ENCODE measurements at regions of chr17 and their contacts with region 1.

Region 1: DNA sequence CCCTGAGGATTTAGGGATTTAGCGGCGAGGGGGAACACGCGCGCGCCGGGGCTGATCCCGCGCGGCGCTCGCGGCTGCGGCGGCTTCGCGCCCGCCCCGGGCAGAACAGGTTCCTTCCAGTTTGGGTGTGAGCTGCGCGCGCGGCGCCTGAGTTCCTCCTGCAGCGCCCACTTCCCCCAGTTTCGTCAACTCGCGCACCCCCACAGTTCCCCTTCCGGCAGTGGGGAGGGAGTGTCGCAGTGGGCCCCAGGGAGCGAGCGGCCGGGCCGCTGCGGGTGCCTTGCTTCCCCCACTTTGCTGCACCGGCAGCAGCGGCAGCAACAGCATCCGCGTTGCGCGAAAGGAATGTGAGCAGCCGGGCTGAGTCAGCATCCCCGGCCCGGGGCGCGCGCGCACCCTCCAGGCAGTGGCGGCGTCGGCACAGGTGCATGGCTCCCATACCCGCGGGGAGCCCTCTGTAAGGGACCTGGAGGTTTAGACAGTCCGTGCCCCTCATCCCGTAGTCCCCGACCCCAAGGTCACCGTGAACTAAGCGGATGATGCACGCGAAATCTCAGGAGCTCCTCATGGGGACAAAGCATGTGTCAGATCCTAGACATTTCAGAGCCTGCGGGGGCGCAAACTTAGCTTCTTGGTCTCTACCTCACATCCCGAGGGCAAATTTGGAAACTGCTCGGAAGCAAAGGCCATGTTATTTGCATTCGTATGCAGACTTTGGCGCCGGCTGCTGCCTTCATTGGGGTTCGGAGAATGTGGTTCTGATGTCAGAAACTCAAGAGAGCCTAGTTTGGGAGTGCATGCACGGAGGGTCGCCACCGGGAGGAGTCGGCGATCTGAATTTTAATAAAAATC is 775 bp downstream of the ARSG start:
- DNase-seq: peak; percentile 75 to 77
- ATAC-seq: peak; percentile 72 to 85 (median 81)
- H3K4me3 ChIP-seq: peak overlapping the region; percentile 44 to 85 (median 72)
- H3K27ac ChIP-seq: peak overlapping the region in 9 of 10 donors; percentile 34 to 98 (median 81)
- H3K4me1 ChIP-seq: peaks cover 4 to 67% (median 20%) of the 10 kb centered on the region in 9 donors
- H3K27me3 ChIP-seq: peaks cover 0 to 34% (median 14%) of the 10 kb centered on the region in 7 donors
- CTCF ChIP-seq: peak in 2 of 9 donors; percentile 6 to 8

Region 2: GRCh38 chr17:68346448-68346847 is 54.4 kb after region 1 on chr17:
- intact Hi-C with region 1: no loop called
- DNase-seq: peak in 1 of 2 donors; percentile 31
- ATAC-seq: peak in 6 of 8 donors; percentile 22 to 56 (median 50)
- H3K4me3 ChIP-seq: no peak overlapping the region
- H3K27ac ChIP-seq: peak overlapping the region in 2 of 10 donors; percentile 55 to 87
- H3K4me1 ChIP-seq: peaks cover 0 to 59% (median 0%) of the 10 kb centered on the region in 9 donors
- H3K27me3 ChIP-seq: no peaks in the 10 kb centered on the region
- CTCF ChIP-seq: no peak

Region 3: DNA sequence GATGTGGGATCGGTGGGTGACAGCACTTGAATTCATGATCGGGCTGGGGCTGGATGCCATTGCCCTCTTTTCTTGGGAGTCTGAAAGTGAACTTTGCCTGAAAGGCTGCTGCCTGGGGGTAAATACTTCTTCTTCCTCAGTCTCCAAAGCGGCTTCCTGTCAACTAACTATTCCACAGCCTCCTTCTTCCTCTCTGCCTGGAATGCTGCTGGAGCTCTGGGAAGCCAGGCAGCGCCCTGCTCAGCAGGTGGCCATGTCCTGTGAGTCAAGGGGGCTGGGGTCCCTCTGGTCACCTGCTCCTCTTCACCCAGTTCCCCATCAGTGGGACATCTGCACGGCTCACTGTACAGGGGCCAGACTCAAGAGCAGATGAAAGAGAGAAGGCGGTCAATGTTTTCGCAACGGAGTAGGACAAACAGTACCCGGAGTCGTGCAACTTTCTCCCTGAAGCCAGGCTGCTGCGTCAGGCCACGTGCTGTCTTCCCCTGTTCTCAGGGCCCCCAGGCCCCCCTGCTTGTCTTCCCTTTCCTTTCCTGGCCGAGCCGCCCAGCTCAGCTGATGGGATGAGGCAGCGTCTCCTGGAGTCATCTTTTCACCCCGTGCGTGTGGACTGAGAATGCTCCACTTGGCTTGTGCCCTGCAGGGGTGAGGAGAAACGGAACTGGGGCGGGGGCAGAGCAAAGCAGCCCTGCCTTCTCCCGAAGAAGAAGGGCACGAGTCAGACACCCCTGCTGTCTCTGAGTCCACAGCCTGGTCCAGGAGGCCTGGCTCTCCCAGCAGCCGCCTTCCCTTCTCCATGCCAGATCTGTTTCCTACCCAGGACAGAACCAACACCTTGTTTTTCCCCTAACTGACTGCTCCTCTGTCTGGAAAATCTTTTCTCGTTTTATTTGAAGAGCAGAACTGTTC is 86.0 kb after region 1 on chr17:
- intact Hi-C with region 1: loop called in 2 of 10 experiments (anchors 5 kb)
- DNase-seq: peak; percentile 92
- ATAC-seq: peak; percentile 89 to 96 (median 94)
- H3K4me3 ChIP-seq: peak overlapping the region in 6 of 10 donors; percentile 11 to 36 (median 18)
- H3K27ac ChIP-seq: peak overlapping the region; percentile 87 to 100 (median 94)
- H3K4me1 ChIP-seq: peaks cover 18 to 57% (median 36%) of the 10 kb centered on the region in 9 donors
- H3K27me3 ChIP-seq: no peaks in the 10 kb centered on the region
- CTCF ChIP-seq: no peak